HEK293T (cell line): ENCODE measurements at regions of chr20 and their contacts with region 1.

Region 1: GRCh38 chr20:57698117-57698866 is 11.5 kb downstream of the PMEPA1 start:
- DNase-seq: no peak

Region 2: DNA sequence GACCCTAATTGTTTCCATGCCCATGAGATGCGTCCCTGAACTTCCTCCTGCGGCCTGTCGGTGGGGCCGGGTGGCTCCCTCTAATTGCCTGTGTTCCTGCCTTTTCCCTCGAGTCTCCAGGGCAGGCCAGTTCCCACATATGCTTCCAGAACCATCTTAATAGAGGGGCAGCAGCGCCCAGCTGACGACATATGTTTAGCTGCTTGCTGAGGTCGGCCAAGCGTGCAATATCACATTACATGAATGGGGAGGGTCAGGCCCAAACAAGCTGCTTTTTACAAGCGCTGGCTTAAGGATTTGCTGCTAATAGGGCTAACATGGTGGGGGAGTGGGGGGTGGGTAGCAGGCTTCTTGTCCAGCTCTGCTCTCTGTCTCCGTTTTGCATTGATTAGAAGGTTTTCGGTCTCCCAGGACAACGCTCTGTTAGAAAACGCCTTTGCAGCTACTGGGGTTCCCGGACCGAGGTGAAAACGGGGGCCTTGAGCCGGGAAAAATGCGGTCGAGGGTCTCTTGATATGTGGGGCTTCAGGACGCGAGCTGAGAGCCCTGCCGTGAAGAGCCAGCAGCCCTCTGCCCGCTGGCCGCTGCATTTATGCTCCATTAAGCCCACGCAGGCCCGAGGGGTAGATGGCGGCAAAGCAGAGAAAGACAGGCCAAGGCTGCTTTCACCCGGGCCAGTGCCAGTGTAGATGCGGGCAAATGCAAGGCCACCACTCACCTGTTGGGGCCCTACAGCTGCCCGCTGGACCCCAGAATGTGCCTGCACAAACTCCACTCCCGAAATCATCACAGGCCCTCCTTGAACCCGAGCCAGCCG is 740.3 kb before region 1 on chr20:
- CTCF ChIA-PET with region 1: no interaction called
- POLR2A ChIA-PET with region 1: no interaction called
- DNase-seq: peak; percentile 61

Region 3: DNA sequence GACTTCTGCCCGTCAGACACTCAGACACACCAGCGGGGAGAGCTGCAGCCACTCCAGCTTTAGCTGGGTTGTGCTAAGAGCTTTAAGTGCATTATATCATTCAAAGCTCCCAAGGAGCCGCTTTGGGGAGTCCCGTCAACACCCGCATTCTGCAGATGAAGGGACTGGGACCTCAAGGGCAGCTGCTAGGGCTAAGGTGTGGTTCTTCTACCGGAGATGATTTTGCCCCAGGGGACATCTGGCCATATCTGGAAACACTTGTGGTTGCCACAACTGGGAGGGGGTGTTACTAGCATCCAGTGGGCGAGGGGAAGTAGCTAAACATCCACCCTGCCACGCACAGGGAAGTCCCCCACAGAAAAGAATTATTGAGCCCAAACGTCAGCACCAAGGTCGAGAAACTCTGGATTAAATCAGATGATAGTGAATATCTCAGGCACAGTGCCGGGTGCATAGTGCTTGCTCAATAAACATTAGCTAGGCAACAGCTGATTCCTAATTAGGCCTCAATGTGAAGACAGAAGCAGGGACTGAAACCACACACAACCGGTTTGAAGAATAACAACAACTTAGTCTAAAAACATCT is 18.1 kb before region 1 on chr20:
- CTCF ChIA-PET with region 1: no interaction called
- POLR2A ChIA-PET with region 1: no interaction called
- DNase-seq: no peak

Region 4: DNA sequence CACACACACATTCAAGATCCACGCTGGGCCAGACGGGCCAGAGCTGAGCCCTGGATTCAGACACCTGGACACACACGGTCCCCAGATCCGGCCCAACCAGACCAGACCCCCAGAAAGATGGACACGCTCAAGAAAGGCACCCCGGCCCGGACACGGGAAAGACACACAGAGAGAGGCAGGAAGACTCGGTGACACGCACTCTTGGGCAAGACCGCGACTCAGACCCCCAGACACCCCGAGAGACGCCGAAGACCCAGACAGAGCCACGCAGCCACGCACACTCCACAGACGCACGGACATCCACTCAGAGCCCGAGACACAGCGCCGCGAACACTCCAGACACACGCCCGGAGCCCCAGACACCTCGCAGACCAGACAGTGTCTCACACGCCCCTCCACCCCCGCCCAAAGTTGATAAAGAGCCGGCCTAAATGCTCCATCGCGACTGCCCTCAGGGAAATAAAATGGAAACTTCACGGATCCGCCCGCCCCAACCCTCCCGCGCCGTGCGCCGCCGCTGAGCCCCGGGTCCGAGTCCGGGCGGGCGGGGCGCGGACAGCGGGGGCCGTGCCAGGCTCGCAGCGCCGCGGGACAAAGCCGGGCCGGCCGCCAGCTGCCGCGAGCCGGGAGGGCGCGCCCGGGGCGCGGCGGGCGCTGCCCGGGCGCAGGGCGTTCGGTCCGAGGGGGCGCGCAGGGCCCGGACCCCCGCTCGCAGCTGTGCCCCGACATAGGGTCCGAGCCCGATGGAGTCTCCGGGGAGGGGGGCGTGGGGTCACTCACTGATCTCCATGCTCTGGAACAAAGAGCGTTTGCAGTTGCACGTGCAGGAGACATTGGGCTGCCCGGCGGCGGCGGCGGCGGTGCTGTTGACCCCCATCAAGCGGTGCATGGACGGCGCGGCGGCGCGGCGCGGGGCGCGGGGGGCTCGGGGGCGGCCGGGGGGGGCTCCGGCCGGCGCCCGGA is 10.7 kb after region 1 on chr20:
- CTCF ChIA-PET with region 1: interaction called, 3 read pairs
- POLR2A ChIA-PET with region 1: interaction called, 10 read pairs
- DNase-seq: peak; percentile 39

Region 5: GRCh38 chr20:57738481-57738880 is 40.2 kb after region 1 on chr20:
- CTCF ChIA-PET with region 1: no interaction called
- POLR2A ChIA-PET with region 1: no interaction called
- DNase-seq: peak; percentile 34